Mammary epithelial cell (primary cell): ENCODE measurements at regions of chr17 and their contacts with region 1.

Region 1: DNA sequence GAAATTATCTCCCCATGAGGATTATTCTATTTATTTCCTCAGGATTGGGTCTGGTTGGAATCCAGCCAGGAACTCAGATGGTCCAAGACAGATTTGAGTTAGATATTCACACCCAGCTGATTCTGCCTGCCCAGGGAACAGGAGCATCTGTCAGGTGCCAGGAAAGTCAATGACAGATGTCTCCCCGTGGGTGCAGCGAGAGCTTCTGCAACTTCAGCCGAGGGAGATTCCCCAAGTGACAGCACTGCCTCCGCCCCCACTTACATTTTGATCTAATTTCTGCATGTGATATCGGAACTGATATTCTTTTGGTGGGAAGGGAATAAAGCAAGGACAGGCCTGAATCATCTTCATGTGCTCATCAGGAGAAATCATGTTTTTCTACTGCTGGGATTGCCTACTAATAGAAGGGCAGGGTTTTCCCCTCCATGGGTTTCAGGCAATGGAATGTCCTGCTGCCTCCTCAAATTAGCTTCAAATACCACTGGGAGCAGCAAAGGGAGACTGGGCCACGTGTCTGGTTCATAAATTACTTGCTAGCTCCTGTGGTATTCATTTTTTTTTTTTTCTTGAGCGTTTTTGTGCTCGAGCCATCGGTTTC is 15.7 kb upstream of the DHX8 start:
- DNase-seq: peak; percentile 86
- H3K4me3 ChIP-seq: no peak overlapping the region
- H3K27ac ChIP-seq: peak overlapping the region; percentile 99
- H3K4me1 ChIP-seq: peaks cover 32% of the 10 kb centered on the region
- H3K27me3 ChIP-seq: no peaks in the 10 kb centered on the region
- CTCF ChIP-seq: peak in 1 of 2 donors; percentile 11

Region 2: DNA sequence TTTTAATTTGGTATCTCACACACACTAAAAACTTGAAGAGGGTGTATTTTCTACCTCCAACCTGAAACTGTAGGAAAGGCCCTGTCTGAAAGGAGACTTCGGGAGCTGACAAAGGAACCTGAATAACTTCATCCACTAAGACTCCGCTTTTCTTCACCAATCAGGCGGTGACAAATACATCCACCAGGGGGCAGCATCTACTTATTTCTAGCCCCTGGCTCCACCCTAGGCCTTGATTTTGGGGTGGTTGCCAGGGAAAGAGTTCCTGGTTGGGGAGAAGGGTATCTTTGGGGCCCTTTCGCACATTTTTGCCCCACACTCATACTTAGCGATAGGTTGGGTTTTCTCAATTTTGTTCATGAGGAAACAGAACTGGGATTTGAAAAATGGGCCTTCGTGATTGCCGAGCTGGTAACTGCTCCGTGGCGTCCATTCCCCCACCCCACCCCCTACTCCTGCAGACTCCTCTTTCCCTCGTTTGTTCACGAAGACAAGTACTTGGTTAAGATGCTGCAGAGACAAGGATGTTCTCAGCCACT is 74.1 kb before region 1 on chr17:
- CTCF ChIA-PET with region 1: interaction called, 3 read pairs
- dilution Hi-C with region 1: loop called (anchors 5 kb)
- in situ Hi-C with region 1: no loop called
- intact Hi-C with region 1: loop called (anchors 1 kb)
- DNase-seq: peak; percentile 68
- H3K4me3 ChIP-seq: no peak overlapping the region
- H3K27ac ChIP-seq: no peak overlapping the region
- H3K4me1 ChIP-seq: peaks cover 11% of the 10 kb centered on the region
- H3K27me3 ChIP-seq: no peaks in the 10 kb centered on the region
- CTCF ChIP-seq: peak; percentile 84 to 89

Region 3: DNA sequence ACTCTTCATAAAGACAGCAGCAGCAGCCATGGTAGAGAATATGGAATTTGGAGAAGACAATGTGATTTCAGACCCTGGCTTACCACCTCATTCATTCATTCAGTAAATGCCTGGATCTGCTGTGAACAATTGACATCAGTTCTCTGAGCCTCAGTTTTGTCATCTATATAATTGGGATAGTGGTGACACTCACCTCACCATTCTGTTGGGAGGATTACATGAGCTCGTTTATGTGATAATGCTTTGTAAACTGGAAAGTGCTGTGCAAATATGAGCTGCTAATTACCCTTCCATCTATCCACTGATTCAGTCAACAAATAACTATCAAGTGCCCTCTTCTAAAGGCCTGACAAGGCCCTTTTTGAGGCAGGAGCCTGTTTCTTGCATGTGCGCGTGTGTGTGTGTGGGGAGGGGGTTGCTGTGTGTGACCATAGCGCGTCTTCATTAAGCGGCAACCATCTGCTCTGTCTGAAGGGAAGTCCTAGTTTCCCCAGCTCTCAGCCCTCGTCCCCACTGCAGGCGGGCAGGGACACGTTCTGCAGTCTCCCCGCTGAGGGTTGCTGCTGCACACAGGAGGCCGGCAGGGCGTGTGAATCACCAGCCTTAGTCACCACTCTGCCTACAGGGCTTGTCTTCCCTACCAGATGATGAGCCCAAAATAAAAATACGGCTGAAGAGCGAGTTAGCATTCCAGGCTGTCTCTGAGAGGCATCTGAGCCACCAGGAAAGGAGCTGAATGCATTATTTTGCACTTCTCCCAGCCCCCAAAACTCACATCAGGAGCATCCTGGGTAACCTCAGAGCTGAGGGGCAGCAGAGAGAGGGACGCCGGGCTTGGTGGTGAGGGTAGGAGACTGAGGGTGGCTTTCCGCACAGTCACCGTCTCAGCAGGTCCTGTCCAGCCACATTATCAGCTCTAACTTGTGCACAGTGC is 49.4 kb before region 1 on chr17:
- CTCF ChIA-PET with region 1: no interaction called
- dilution Hi-C with region 1: no loop called
- in situ Hi-C with region 1: no loop called
- intact Hi-C with region 1: loop called (anchors 2 kb)
- DNase-seq: peak; percentile 95
- H3K4me3 ChIP-seq: peak overlapping the region; percentile 16 to 41 (median 37)
- H3K27ac ChIP-seq: peak overlapping the region; percentile 73
- H3K4me1 ChIP-seq: peaks cover 39% of the 10 kb centered on the region
- H3K27me3 ChIP-seq: no peaks in the 10 kb centered on the region
- CTCF ChIP-seq: peak in 1 of 2 donors; percentile 25

Region 4: GRCh38 chr17:43449470-43450248 is 18.4 kb before region 1 on chr17:
- CTCF ChIA-PET with region 1: no interaction called
- dilution Hi-C with region 1: no loop called
- in situ Hi-C with region 1: no loop called
- intact Hi-C with region 1: loop called (anchors 2 kb)
- DNase-seq: peak; percentile 49
- H3K4me3 ChIP-seq: no peak overlapping the region
- H3K27ac ChIP-seq: no peak overlapping the region
- H3K4me1 ChIP-seq: peaks cover 17% of the 10 kb centered on the region
- H3K27me3 ChIP-seq: no peaks in the 10 kb centered on the region
- CTCF ChIP-seq: no peak